ENCODE measurements at regions of chr18 and their contacts with region 1.

Region 1: GRCh38 chr18:65934874-65935273 is 184.1 kb downstream of the CDH7 start:
- DNase-seq: no peak
- ATAC-seq: no peak
- H3K4me3 ChIP-seq: no peak overlapping the region
- H3K27ac ChIP-seq: no peak overlapping the region
- H3K4me1 ChIP-seq: no peaks in the 10 kb centered on the region
- H3K27me3 ChIP-seq: no peaks in the 10 kb centered on the region
- CTCF ChIP-seq: no peak

Region 2: DNA sequence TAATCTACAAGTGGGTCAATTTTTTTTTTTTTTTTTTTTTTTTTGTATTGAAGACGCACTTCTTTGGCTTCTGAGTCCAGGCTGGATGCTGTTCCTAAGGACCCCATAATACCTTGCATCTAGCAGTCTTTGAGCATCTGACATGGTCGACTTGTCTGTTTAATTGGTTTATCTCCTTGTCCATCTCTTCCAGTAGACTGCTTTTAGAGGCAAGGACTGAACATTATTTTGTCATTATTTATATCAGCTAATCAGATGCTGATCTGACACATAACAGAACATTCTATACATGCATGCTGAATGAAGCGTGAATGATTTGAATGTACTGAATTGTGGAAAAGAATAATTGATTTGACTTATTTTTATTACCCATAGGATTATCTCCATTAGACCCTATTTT is 65.3 kb before region 1 on chr18:
- intact Hi-C with region 1: no loop called
- DNase-seq: no peak
- ATAC-seq: no peak
- H3K4me3 ChIP-seq: no peak overlapping the region
- H3K27ac ChIP-seq: no peak overlapping the region
- H3K4me1 ChIP-seq: no peaks in the 10 kb centered on the region
- H3K27me3 ChIP-seq: no peaks in the 10 kb centered on the region
- CTCF ChIP-seq: no peak

Region 3: GRCh38 chr18:67194886-67195285 is 1260.0 kb after region 1 on chr18:
- intact Hi-C with region 1: loop called in 1 of 10 experiments (anchors 5 kb)
- DNase-seq: no peak
- ATAC-seq: no peak
- H3K4me3 ChIP-seq: no peak overlapping the region
- H3K27ac ChIP-seq: no peak overlapping the region
- H3K4me1 ChIP-seq: no peaks in the 10 kb centered on the region
- H3K27me3 ChIP-seq: peaks cover 0 to 5% (median 0%) of the 10 kb centered on the region in 7 donors
- CTCF ChIP-seq: no peak